Cardiac septum (tissue), 1 donor: ENCODE measurements at regions of chr1 and their contacts with region 1.

Region 1: GRCh38 chr1:202750758-202751157 is 40.5 kb upstream of the SYT2 start:
- DNase-seq: no peak

Region 2: GRCh38 chr1:203006948-203007871 is 256.5 kb after region 1 on chr1 and contains the start of gene TMEM183A:
- intact Hi-C with region 1: loop called (anchors 5 kb)
- DNase-seq: peak; percentile 98
- total RNA-seq, gene TMEM183A: 27.7 TPM